ENCODE measurements at regions of chr2 and their contacts with region 1.

Region 1: GRCh38 chr2:195664528-195664927 is 7.5 kb downstream of the SLC39A10 start:
- DNase-seq: no peak
- ATAC-seq: no peak
- H3K4me3 ChIP-seq: no peak overlapping the region
- H3K27ac ChIP-seq: no peak overlapping the region
- H3K4me1 ChIP-seq: no peaks in the 10 kb centered on the region
- H3K27me3 ChIP-seq: no peaks in the 10 kb centered on the region
- CTCF ChIP-seq: no peak; a peak in 1 of 6 replicates
- EP300 ChIP-seq: no peak
- POLR2A ChIP-seq: no peak
- RAD21 ChIP-seq: peak; percentile 45; the same call in 1 of the 2 replicates

Region 2: DNA sequence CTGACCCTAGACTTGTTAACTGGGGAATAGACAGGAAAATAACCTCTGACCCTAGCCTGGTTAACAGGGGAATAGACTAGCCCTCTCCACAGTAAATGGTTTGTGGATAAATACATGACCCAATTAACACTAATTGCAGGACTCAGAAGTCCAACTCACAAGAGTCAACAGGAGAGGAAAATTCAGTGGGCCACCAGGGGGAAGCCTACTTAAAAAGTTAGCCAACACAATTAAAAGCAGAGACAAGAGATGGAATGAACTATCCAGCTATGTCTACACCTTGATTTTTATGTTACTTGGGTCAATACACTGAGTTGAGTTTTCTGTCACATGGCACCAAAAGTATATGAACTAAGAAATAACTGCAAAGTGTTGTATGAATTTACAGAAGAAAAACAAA is 166.4 kb before region 1 on chr2:
- CTCF ChIA-PET with region 1: interaction called, 92 read pairs
- POLR2A ChIA-PET with region 1: interaction called, 3 read pairs
- RAD21 ChIA-PET with region 1: interaction called, 124 read pairs
- SMC1A ChIA-PET with region 1: interaction called, 83 read pairs
- in situ Hi-C with region 1: loop called (anchors 10 kb)
- intact Hi-C with region 1: loop called (anchors 1 kb)
- DNase-seq: no peak
- ATAC-seq: peak; percentile 78
- H3K4me3 ChIP-seq: no peak overlapping the region
- H3K27ac ChIP-seq: no peak overlapping the region
- H3K4me1 ChIP-seq: no peaks in the 10 kb centered on the region
- H3K27me3 ChIP-seq: no peaks in the 10 kb centered on the region
- CTCF ChIP-seq: peak; percentile 33 to 56 (median 44)
- EP300 ChIP-seq: no peak
- POLR2A ChIP-seq: no peak
- RAD21 ChIP-seq: peak; percentile 70

Region 3: GRCh38 chr2:195687320-195688086 is 23.0 kb after region 1 on chr2:
- CTCF ChIA-PET with region 1: interaction called, 5 read pairs
- POLR2A ChIA-PET with region 1: no interaction called
- RAD21 ChIA-PET with region 1: interaction called, 11 read pairs
- SMC1A ChIA-PET with region 1: interaction called, 18 read pairs
- in situ Hi-C with region 1: no loop called
- intact Hi-C with region 1: no loop called
- DNase-seq: peak; percentile 30
- ATAC-seq: peak; percentile 75
- H3K4me3 ChIP-seq: no peak overlapping the region
- H3K27ac ChIP-seq: no peak overlapping the region
- H3K4me1 ChIP-seq: no peaks in the 10 kb centered on the region
- H3K27me3 ChIP-seq: no peaks in the 10 kb centered on the region
- CTCF ChIP-seq: no peak
- EP300 ChIP-seq: no peak
- POLR2A ChIP-seq: no peak
- RAD21 ChIP-seq: no peak

Region 4: GRCh38 chr2:195937176-195937575 is 272.6 kb after region 1 on chr2:
- CTCF ChIA-PET with region 1: interaction called, 8 read pairs
- POLR2A ChIA-PET with region 1: no interaction called
- RAD21 ChIA-PET with region 1: interaction called, 5 read pairs
- SMC1A ChIA-PET with region 1: interaction called, 11 read pairs
- in situ Hi-C with region 1: no loop called
- intact Hi-C with region 1: loop called (anchors 5 kb)
- DNase-seq: no peak
- ATAC-seq: no peak
- H3K4me3 ChIP-seq: no peak overlapping the region
- H3K27ac ChIP-seq: no peak overlapping the region
- H3K4me1 ChIP-seq: no peaks in the 10 kb centered on the region
- H3K27me3 ChIP-seq: no peaks in the 10 kb centered on the region
- CTCF ChIP-seq: no peak
- EP300 ChIP-seq: no peak
- POLR2A ChIP-seq: no peak
- RAD21 ChIP-seq: no peak

Region 5: GRCh38 chr2:196331143-196331542 is 666.6 kb after region 1 on chr2:
- CTCF ChIA-PET with region 1: no interaction called
- POLR2A ChIA-PET with region 1: no interaction called
- RAD21 ChIA-PET with region 1: no interaction called
- SMC1A ChIA-PET with region 1: no interaction called
- in situ Hi-C with region 1: no loop called
- intact Hi-C with region 1: no loop called
- DNase-seq: no peak
- ATAC-seq: no peak
- H3K4me3 ChIP-seq: no peak overlapping the region
- H3K27ac ChIP-seq: no peak overlapping the region
- H3K4me1 ChIP-seq: no peaks in the 10 kb centered on the region
- H3K27me3 ChIP-seq: no peaks in the 10 kb centered on the region
- CTCF ChIP-seq: no peak
- EP300 ChIP-seq: no peak
- POLR2A ChIP-seq: no peak
- RAD21 ChIP-seq: no peak